CD4-positive, alpha-beta memory T cell (primary cell): ENCODE measurements at regions of chr1 and their contacts with region 1.

Region 1: GRCh38 chr1:225447650-225448089 is 19.8 kb upstream of the LBR start:
- DNase-seq: no peak
- H3K4me3 ChIP-seq: no peak overlapping the region
- H3K4me3 Mint-ChIP-seq: no peak overlapping the region
- H3K27ac ChIP-seq: no peak overlapping the region
- H3K27ac Mint-ChIP-seq: peak overlapping the region in 1 of 7 donors; percentile 17
- H3K4me1 ChIP-seq: peaks cover 47% of the 10 kb centered on the region
- H3K4me1 Mint-ChIP-seq: peaks cover 29 to 55% (median 43%) of the 10 kb centered on the region in 4 donors
- H3K27me3 ChIP-seq: no peaks in the 10 kb centered on the region
- H3K27me3 Mint-ChIP-seq: no peaks in the 10 kb centered on the region

Region 2: DNA sequence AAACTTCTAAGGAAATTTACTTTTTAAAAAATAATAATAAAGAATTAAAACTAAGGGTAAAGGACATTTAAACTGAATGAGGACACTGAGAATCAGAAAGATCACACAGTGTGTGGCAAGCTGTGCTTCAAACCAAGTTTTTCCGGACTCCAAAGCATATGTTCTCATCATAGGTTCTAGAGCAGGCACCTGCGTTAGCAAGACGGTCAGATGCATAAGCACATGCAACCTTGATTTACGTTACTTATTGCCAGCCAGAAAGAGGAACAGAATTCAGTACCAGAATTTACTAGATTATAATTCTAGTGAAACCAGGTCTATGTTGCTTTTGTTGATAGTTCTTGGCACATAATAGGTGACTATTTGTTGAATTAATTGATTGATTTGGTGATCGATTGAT is 13.6 kb before region 1 on chr1:
- CTCF ChIA-PET with region 1: interaction called, 87 read pairs
- POLR2A ChIA-PET with region 1: interaction called, 319 read pairs
- intact Hi-C with region 1: no loop called
- DNase-seq: no peak
- H3K4me3 ChIP-seq: no peak overlapping the region
- H3K4me3 Mint-ChIP-seq: no peak overlapping the region
- H3K27ac ChIP-seq: no peak overlapping the region
- H3K27ac Mint-ChIP-seq: no peak overlapping the region
- H3K4me1 ChIP-seq: peaks cover 5% of the 10 kb centered on the region
- H3K4me1 Mint-ChIP-seq: peaks cover 3 to 8% (median 7%) of the 10 kb centered on the region in 4 donors
- H3K27me3 ChIP-seq: no peaks in the 10 kb centered on the region
- H3K27me3 Mint-ChIP-seq: peaks cover 0 to 2% of the 10 kb centered on the region in 2 donors

Region 3: DNA sequence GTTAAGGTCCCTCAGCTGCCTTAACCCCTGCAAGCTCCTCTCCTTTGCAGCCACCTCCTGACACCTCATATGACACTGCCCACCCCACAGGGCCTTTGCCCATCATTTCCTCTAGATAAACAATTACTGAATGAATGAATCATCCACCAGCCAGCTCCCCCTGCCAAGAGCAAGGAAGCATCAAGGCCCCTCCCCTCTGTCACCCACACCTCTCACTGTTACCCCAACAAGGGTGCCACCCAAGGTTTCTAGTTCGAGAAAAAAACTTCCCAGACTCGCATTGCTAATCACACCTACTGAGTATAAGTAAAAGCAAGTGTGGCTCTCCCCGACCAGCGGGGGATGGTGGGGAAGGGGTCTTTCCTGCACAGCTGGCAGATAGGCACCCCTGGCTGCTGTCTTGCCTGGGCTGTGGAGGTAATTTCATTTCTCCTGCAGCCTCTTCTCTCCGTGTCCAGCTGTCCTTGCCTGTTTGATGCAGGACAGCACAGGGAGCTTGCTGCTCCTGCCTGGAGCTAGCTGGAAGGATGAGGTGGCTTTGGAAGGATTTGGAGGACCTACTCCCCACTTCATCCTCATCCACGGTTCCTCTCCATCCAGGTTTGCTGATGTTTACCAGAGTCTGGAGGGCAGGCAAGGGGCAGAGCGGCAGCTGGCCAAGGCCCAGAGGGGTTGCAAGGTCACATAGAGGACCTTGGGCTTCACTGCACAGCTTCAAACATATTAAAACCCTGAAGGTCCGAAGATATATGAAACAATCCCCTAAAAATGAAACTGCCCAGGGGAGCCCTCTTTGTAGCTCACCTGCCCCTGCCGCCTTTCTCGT is 13.3 kb after region 1 on chr1:
- CTCF ChIA-PET with region 1: interaction called, 3 read pairs
- POLR2A ChIA-PET with region 1: interaction called, 34 read pairs
- intact Hi-C with region 1: no loop called
- DNase-seq: peak; percentile 24 to 75 (median 35)
- H3K4me3 ChIP-seq: no peak overlapping the region
- H3K4me3 Mint-ChIP-seq: peak overlapping the region in 4 of 8 donors; percentile 0 to 57 (median 33)
- H3K27ac ChIP-seq: peak overlapping the region; percentile 8
- H3K27ac Mint-ChIP-seq: peak overlapping the region in 6 of 7 donors; percentile 39 to 91 (median 76)
- H3K4me1 ChIP-seq: peaks cover 36% of the 10 kb centered on the region
- H3K4me1 Mint-ChIP-seq: peaks cover 20 to 51% (median 39%) of the 10 kb centered on the region in 4 donors
- H3K27me3 ChIP-seq: no peaks in the 10 kb centered on the region
- H3K27me3 Mint-ChIP-seq: no peaks in the 10 kb centered on the region

Region 4: GRCh38 chr1:225944951-225945350 is 497.3 kb after region 1 on chr1:
- CTCF ChIA-PET with region 1: no interaction called
- POLR2A ChIA-PET with region 1: no interaction called
- intact Hi-C with region 1: no loop called
- DNase-seq: no peak
- H3K4me3 ChIP-seq: no peak overlapping the region
- H3K4me3 Mint-ChIP-seq: peak overlapping the region in 5 of 8 donors; percentile 23 to 76 (median 71)
- H3K27ac ChIP-seq: no peak overlapping the region
- H3K27ac Mint-ChIP-seq: peak overlapping the region in 5 of 7 donors; percentile 11 to 73 (median 59)
- H3K4me1 ChIP-seq: peaks cover 10% of the 10 kb centered on the region
- H3K4me1 Mint-ChIP-seq: peaks cover 6 to 16% (median 9%) of the 10 kb centered on the region in 4 donors
- H3K27me3 ChIP-seq: no peaks in the 10 kb centered on the region
- H3K27me3 Mint-ChIP-seq: peaks cover 2 to 12% of the 10 kb centered on the region in 2 donors